ENCODE measurements at regions of chr12 and their contacts with region 1.

Region 1: DNA sequence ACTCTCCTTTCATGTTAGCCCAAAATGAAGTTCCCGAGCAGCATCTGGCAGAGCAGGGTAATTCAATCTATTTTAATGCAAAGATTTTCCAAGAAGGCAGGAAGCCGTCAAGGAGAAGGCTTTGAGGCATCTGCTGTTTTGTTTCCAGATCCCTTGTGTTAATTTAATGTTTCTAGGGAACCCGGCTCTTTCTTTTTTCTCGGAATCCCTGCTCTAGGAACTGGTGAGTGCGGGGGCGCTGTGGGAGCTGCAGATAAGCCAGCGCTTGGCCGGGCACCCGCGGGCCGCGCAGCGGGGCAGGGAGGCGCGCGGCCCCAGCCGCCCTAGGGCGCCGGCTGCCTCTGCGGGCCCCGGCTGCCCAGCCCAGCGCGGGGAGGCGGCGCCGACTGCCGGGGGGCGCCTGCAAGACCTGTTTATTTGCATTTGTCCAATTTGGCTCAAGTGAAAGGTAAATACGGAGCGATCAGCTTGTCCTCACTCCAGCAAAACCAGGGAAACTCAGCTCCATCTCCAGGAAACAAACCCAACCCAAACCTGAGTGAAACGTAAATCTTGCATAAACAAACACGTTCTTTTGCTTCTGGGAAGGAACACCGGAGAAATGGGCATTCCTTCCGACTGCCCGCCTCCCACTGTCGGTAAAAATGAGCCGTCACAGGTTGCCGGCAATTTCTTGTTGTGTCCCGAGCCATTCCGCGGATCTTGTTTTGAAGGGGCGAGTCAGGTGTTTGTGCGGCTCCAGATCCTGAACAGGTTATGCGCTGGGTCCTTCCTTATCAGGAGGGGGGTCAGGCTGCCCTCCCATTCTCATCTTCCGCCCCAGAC is 65.1 kb downstream of the CRADD start:
- DNase-seq: peak; percentile 87
- H3K4me3 Mint-ChIP-seq: peak overlapping the region; percentile 91
- H3K27ac Mint-ChIP-seq: peak overlapping the region; percentile 91
- H3K4me1 Mint-ChIP-seq: peaks cover 26% of the 10 kb centered on the region
- H3K27me3 Mint-ChIP-seq: no peaks in the 10 kb centered on the region

Region 2: GRCh38 chr12:93502802-93503623 is 239.3 kb before region 1 on chr12:
- intact Hi-C with region 1: loop called (anchors 2 kb)
- DNase-seq: peak; percentile 90
- H3K4me3 Mint-ChIP-seq: no peak overlapping the region
- H3K27ac Mint-ChIP-seq: no peak overlapping the region
- H3K4me1 Mint-ChIP-seq: peaks cover 18% of the 10 kb centered on the region
- H3K27me3 Mint-ChIP-seq: no peaks in the 10 kb centered on the region

Region 3: DNA sequence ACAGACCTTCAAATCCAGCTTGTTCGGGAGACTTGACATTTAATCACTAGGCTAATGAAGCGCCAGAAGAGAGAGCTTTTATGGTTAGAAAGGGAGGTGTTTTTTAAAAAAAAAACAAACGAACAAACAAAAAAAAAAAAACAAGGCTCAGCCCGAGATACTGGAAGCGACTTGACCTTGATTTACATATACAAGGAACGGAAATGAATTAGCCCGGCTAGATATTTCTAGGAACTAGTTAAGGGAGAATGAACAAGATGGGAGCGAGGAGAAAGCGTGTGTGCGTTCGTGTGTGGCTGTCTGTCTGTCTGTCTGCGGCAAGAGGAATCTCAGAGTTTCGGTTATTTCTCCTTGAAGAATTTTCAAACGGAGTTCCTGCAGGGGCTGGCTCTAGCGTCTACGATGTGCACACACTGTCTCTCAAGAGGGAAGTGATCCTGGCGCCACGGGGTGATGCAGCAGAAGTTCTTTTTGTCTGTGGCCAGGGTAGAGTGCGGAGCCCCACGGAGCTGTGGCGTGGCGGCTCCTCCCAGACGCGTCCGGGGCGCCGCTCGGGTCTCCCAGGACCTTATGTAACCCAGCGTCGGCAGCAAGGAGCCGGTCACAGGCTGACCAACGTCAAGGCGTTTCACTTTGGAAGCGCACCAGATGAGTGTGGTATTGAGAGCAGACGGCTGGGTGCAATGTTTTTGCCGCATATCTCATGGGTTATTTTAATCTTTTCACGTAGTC is 151.0 kb before region 1 on chr12:
- intact Hi-C with region 1: loop called (anchors 2 kb)
- DNase-seq: peak; percentile 82
- H3K4me3 Mint-ChIP-seq: peak overlapping the region; percentile 92
- H3K27ac Mint-ChIP-seq: peak overlapping the region; percentile 38
- H3K4me1 Mint-ChIP-seq: peaks cover 30% of the 10 kb centered on the region
- H3K27me3 Mint-ChIP-seq: peaks cover 40% of the 10 kb centered on the region

Region 4: GRCh38 chr12:93766796-93767523 is 24.6 kb after region 1 on chr12:
- intact Hi-C with region 1: loop called (anchors 2 kb)
- DNase-seq: peak; percentile 85
- H3K4me3 Mint-ChIP-seq: peak overlapping the region; percentile 31
- H3K27ac Mint-ChIP-seq: no peak overlapping the region
- H3K4me1 Mint-ChIP-seq: peaks cover 40% of the 10 kb centered on the region
- H3K27me3 Mint-ChIP-seq: no peaks in the 10 kb centered on the region

Measured in activated CD4-positive, alpha-beta T cell treated with anti-CD3 and anti-CD28 coated beads, Interleukin-2, amount 10 ng/mL, durations not matched to agents 24 days and 14 days (primary cell).